ENCODE measurements at regions of chr1 and their contacts with region 1.

Region 1: GRCh38 chr1:38615680-38616079 is 243.9 kb downstream of the RRAGC start:
- DNase-seq: no peak
- ATAC-seq: no peak
- H3K4me3 ChIP-seq: no peak overlapping the region
- H3K27ac ChIP-seq: no peak overlapping the region
- H3K4me1 ChIP-seq: no peaks in the 10 kb centered on the region
- H3K27me3 ChIP-seq: no peaks in the 10 kb centered on the region

Region 2: DNA sequence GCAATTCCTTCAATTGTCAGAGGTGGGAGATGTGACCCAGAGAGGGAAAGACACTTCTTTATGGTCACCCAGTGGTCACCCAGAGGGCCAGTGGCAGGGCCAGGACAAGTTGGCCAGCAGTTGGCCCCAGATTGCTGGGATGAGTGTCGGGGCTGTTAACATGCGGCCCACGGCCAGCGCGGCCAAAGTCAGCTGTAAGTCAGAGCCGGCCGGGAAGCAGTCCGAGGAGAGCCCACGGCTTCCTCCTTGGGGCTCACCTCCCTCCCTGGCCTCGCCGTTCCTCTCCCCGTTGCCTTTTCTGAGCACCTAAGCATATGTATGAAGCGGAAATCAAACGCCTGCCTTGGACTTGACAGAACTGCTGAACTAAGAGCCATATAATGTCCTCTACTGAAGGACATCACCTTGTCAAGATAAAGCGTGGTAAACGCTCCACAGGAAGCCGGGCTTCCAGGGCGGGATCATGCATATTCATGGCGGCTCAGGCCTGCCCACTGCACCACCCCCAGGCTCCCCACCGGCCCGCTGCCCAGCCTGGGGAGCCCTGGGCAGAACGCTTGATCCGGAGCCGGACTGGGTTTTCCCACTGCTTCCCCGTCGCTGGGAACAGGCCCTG is 323.7 kb before region 1 on chr1:
- intact Hi-C with region 1: no loop called
- DNase-seq: peak; percentile 17 to 64 (median 54)
- ATAC-seq: peak; percentile 72 to 87
- H3K4me3 ChIP-seq: no peak overlapping the region
- H3K27ac ChIP-seq: no peak overlapping the region
- H3K4me1 ChIP-seq: no peaks in the 10 kb centered on the region
- H3K27me3 ChIP-seq: no peaks in the 10 kb centered on the region

Region 3: GRCh38 chr1:38826262-38826661 is 210.6 kb after region 1 on chr1:
- intact Hi-C with region 1: loop called in 1 of 4 experiments (anchors 10 kb)
- DNase-seq: no peak
- ATAC-seq: no peak
- H3K4me3 ChIP-seq: no peak overlapping the region
- H3K27ac ChIP-seq: no peak overlapping the region
- H3K4me1 ChIP-seq: no peaks in the 10 kb centered on the region
- H3K27me3 ChIP-seq: no peaks in the 10 kb centered on the region